Activated naive CD4-positive, alpha-beta T cell treated with anti-CD3 and anti-CD28 coated beads, Interleukin-2, amount 10 ng/mL, durations not matched to agents 7 days and 5 days (primary cell): ENCODE measurements at regions of chr5 and their contacts with region 1.

Region 1: DNA sequence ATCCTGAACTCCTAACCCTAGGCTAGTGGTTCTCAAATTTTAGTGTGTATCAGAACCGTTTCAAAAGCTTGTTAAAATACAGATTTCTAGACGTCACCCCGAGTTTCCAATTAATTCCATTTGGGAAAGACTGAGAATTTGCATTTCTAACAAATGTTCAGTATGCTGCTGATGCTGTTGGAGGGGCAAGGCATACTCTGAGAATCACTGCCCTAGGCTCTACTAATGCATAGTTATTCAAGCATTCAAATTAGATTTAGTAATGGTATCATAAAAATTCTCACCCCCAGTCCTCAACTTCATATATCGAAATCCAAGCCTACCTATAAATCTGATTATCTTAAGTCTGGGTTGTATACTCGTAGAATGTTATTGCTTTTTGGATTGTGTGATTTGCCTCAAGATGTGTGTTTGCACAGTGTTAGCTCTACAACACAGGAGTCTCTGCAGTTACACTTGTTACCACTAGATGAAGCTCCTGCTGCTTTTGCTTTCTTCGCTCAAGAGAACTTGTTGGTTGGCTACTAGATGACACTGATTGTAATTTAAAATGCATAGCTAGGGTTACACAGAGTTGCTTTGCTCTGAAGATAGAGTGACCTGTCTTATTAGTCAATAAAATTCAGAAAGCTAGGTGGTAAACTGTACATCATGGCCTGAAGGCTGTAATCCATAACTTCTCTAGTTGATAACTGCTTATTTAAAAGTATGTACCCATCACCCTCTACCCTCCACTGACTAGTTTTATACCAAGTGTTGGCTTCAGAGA is 7.5 kb upstream of the ERAP2 start:
- DNase-seq: no peak
- H3K4me3 Mint-ChIP-seq: no peak overlapping the region
- H3K27ac Mint-ChIP-seq: peak overlapping the region; percentile 67
- H3K4me1 Mint-ChIP-seq: peaks cover 50% of the 10 kb centered on the region
- H3K27me3 Mint-ChIP-seq: no peaks in the 10 kb centered on the region

Region 2: DNA sequence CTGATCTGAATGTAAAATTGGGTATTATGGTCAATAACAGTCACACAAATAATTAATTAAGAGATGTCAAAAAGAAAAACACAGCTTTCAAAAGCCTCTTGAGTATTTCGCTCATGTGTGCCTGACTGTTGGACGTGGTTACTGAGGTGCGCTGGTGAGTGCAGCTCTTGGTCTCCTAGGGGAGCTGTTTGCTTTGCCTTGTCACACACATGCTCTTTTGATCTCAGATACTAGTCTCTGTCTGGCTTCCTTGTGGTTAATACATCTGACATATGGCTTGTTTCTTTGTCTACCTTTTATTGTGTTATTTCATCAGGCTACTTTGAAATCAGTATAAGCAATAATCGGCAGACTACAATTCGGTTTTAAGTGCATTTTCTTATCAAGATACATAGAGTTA is 487.3 kb before region 1 on chr5:
- CTCF ChIA-PET with region 1: no interaction called
- DNase-seq: no peak
- H3K4me3 Mint-ChIP-seq: no peak overlapping the region
- H3K27ac Mint-ChIP-seq: no peak overlapping the region
- H3K4me1 Mint-ChIP-seq: no peaks in the 10 kb centered on the region
- H3K27me3 Mint-ChIP-seq: peaks cover 13% of the 10 kb centered on the region

Region 3: GRCh38 chr5:96752341-96753016 is 116.3 kb before region 1 on chr5:
- CTCF ChIA-PET with region 1: interaction called, 11 read pairs
- DNase-seq: peak; percentile 41
- H3K4me3 Mint-ChIP-seq: no peak overlapping the region
- H3K27ac Mint-ChIP-seq: no peak overlapping the region
- H3K4me1 Mint-ChIP-seq: no peaks in the 10 kb centered on the region
- H3K27me3 Mint-ChIP-seq: no peaks in the 10 kb centered on the region

Region 4: DNA sequence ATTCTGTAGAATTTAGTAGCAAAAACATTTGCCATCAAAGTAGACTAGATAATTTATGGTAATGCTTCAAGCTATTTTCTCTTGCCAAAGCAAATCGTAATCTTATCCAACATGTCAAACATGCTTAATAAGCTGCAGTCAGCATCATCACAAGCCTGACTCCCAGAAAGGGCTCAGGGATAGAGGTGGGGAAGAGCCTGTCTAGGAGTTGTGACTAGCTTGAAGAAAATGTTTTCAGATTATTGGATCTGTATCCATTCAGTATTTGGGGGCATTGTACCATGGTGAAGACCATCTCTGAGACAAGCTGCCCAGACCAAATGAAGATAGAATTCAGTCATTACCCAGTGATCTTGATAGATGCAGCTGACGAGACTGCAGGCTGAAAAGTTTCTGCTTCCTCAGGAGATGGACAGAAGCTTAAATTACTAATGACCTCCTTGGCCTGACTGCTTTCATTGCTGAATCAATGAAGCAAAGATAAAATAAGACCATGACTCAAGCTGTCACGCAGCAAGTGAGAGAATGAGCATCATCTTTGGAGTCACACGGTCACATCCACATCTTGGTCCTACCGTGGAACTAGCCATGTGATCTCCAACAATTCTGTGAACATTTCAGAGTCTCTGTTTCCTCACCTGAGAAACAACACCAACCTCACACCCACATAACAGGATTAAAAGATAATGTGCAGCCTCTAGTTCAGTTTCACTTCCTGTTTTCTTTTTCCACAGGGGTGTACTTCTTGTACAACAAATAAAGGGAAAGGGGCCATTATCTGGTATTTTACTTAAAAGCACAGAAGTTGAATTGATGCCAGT is 16.9 kb after region 1 on chr5:
- CTCF ChIA-PET with region 1: interaction called, 18 read pairs
- DNase-seq: peak; percentile 62
- H3K4me3 Mint-ChIP-seq: peak overlapping the region; percentile 59
- H3K27ac Mint-ChIP-seq: peak overlapping the region; percentile 96
- H3K4me1 Mint-ChIP-seq: peaks cover 79% of the 10 kb centered on the region
- H3K27me3 Mint-ChIP-seq: no peaks in the 10 kb centered on the region

Region 5: GRCh38 chr5:96935559-96936430 is 67.0 kb after region 1 on chr5 and contains the start of gene LNPEP:
- CTCF ChIA-PET with region 1: interaction called, 11 read pairs
- DNase-seq: peak; percentile 97
- H3K4me3 Mint-ChIP-seq: peak within 1 kb of the TSS; percentile 84
- H3K27ac Mint-ChIP-seq: peak within 1 kb of the TSS; percentile 99
- H3K4me1 Mint-ChIP-seq: peaks cover 61% of the 10 kb centered on the region
- H3K27me3 Mint-ChIP-seq: no peaks in the 10 kb centered on the region

Region 6: DNA sequence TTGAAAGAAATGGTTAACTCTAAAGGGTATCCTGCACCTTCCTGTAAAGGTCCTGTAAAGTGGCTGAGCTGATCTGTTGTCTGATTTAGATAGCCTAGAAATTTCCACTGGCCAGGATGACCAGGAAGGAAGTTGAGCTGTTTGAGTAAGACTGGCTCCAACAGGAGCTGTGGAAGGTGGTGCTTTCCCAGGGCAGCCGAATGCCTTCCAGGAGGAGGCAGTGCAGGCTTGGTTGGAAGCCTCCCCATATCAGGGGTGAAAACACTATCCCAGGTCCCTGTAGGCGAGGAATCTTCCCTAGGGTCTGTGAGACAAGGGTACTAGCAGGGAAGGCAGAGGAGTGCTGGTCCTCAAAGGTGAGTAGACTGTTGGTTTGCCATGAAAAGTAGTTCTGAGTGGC is 175.3 kb after region 1 on chr5:
- CTCF ChIA-PET with region 1: interaction called, 22 read pairs
- DNase-seq: no peak
- H3K4me3 Mint-ChIP-seq: no peak overlapping the region
- H3K27ac Mint-ChIP-seq: no peak overlapping the region
- H3K4me1 Mint-ChIP-seq: no peaks in the 10 kb centered on the region
- H3K27me3 Mint-ChIP-seq: peaks cover 13% of the 10 kb centered on the region

Region 7: DNA sequence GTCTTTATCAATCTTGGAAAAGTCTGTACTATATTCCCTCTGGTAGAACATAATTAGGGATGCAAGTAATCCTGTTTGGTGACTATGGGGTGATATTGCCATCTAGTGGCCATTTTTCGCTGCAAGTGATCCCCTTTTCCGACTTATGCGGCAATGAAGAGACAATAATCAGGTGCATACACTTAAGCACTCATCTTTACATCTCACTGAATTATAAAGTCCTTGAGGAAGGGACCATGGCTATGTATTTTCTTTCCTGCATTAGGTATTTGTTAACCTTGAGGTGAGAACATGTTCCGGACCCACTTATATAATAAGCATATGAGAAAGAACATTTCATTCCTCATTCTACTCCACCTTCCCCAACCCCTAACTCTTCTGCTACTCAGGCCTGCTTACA is 293.3 kb after region 1 on chr5:
- CTCF ChIA-PET with region 1: interaction called, 89 read pairs
- DNase-seq: peak; percentile 66
- H3K4me3 Mint-ChIP-seq: no peak overlapping the region
- H3K27ac Mint-ChIP-seq: no peak overlapping the region
- H3K4me1 Mint-ChIP-seq: peaks cover 6% of the 10 kb centered on the region
- H3K27me3 Mint-ChIP-seq: no peaks in the 10 kb centered on the region